CD4-positive, alpha-beta memory T cell (primary cell): ENCODE measurements at regions of chr12 and their contacts with region 1.

Region 1: DNA sequence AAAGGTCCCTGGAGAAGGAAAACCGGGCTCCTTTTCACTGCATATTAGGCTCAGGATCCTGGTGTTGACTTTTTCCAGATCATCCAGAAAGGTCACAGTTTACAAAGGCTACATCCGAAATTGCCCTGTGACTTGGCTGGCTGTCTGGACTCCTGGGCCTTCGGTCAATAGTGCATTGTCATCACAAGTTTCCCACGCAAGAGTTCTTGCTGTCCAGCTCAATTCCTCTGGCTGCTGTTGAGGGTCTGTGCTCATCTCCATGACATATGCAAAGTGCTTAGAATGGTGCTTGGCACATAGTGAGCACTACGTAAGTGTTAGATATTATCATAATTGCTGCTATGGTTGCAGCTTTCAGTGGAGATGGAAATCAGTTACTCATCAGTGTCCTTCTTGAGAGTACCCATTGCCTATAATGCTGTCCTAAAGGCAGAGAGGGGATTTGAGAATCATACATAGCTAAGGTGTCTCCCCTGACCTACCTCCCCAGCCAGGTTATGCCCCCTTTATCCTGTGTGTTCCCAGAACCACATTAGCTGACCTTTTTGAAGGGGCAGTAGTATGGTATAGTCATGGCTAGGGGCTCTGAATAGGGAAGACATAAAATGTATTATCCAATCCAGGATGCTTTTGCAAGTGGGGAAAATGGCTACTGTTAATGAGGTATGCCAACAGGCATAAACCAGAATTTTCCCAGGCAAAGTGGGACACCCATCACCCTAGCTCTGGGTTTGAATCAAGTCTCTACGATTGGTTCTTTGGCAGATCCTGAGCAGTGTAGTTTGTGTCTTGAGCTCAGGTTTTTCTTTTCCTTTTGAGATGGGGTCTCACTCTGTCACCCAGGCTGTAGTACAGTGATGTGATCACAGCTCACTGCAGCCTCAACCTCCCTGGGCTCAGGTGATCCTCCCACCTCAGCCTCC is 132.0 kb upstream of the CCND2 start:
- DNase-seq: no peak
- H3K4me3 ChIP-seq: no peak overlapping the region
- H3K4me3 Mint-ChIP-seq: peak overlapping the region in 7 of 8 donors; percentile 4 to 100 (median 97)
- H3K27ac ChIP-seq: peak overlapping the region; percentile 64
- H3K27ac Mint-ChIP-seq: peak overlapping the region; percentile 97 to 99 (median 98)
- H3K4me1 ChIP-seq: peaks cover 61% of the 10 kb centered on the region
- H3K4me1 Mint-ChIP-seq: peaks cover 36 to 82% (median 60%) of the 10 kb centered on the region in 4 donors
- H3K27me3 ChIP-seq: no peaks in the 10 kb centered on the region
- H3K27me3 Mint-ChIP-seq: no peaks in the 10 kb centered on the region

Region 2: DNA sequence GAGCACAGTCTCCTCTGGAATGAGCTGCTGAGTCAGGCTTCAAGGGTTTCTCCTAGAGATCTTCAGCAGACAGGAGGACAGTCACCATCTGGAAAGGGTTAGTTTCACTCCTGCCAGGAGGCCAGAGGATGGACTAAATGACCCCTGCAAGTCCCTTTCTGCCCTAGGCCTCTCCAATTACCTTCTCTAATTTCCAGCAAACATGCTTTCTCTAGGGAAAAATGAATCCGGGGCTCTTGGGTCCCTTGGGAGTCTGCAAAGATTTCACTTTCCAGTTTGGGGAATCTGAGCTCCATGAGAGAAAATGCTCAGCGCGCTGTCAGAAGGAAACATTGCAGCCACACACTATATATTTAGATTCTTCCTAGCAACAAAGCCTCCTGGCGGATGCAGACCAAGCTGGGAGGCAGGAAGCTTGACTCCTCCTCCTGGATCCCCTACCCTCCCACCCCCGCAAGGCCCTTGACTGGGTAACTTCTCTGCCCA is 52.4 kb before region 1 on chr12:
- CTCF ChIA-PET with region 1: no interaction called
- POLR2A ChIA-PET with region 1: no interaction called
- intact Hi-C with region 1: no loop called
- DNase-seq: no peak
- H3K4me3 ChIP-seq: no peak overlapping the region
- H3K4me3 Mint-ChIP-seq: no peak overlapping the region
- H3K27ac ChIP-seq: no peak overlapping the region
- H3K27ac Mint-ChIP-seq: no peak overlapping the region
- H3K4me1 ChIP-seq: no peaks in the 10 kb centered on the region
- H3K4me1 Mint-ChIP-seq: no peaks in the 10 kb centered on the region
- H3K27me3 ChIP-seq: no peaks in the 10 kb centered on the region
- H3K27me3 Mint-ChIP-seq: no peaks in the 10 kb centered on the region

Region 3: GRCh38 chr12:4164559-4165558 is 23.2 kb after region 1 on chr12:
- CTCF ChIA-PET with region 1: interaction called, 22 read pairs
- POLR2A ChIA-PET with region 1: interaction called, 17 read pairs
- intact Hi-C with region 1: loop called (anchors 2 kb)
- DNase-seq: peak; percentile 40 to 60 (median 59)
- H3K4me3 ChIP-seq: peak overlapping the region; percentile 9 to 75
- H3K4me3 Mint-ChIP-seq: peak overlapping the region; percentile 83 to 94 (median 90)
- H3K27ac ChIP-seq: peak overlapping the region; percentile 50
- H3K27ac Mint-ChIP-seq: peak overlapping the region; percentile 28 to 96 (median 91)
- H3K4me1 ChIP-seq: peaks cover 12% of the 10 kb centered on the region
- H3K4me1 Mint-ChIP-seq: peaks cover 13 to 29% (median 22%) of the 10 kb centered on the region in 4 donors
- H3K27me3 ChIP-seq: no peaks in the 10 kb centered on the region
- H3K27me3 Mint-ChIP-seq: no peaks in the 10 kb centered on the region